ENCODE measurements at regions of chr6 and their contacts with region 1.

Region 1: DNA sequence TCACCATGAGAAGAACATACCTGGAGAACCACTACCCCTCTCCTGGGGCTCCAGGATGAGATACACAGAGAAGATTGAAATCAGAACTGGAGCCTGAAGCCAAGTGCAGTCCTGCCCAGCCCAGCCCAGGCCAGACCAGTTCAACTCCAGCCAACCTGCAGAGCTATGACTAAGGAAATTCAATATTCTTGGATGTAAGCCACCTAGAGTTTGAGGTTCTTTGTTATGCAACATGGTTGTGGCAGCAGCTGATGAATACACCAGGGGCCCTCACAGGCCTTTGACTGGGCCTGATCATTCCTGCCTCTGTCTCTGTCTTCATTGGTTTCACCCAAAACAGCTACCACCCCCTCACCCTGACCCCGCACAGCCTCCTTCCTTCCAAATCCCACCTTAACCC is 167.8 kb downstream of the LRFN2 start:
- DNase-seq: no peak
- ATAC-seq: no peak
- H3K4me3 ChIP-seq: no peak overlapping the region
- H3K4me1 ChIP-seq: no peaks in the 10 kb centered on the region
- CTCF ChIP-seq: no peak

Region 2: DNA sequence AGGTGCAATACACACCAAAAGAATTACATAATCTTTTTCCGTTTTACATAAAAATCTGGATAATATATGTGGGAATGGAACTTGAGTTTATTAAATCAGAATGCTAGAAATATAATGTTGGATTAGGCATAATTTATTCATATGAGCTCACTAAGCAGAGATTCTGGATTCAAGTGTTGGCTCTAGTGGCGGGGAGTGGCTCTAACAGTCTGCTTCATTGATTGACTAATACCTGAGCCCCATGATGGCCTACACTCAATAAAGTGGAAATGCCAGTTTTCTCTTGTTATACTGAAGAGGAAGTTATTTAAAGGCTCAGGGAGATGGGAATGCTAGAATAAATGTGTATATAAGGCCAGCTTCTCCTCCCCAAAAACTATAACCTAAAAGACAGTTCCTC is 199.6 kb before region 1 on chr6:
- intact Hi-C with region 1: loop called in 1 of 2 experiments (anchors 5 kb)
- DNase-seq: no peak
- ATAC-seq: no peak
- H3K4me3 ChIP-seq: no peak overlapping the region
- H3K4me1 ChIP-seq: no peaks in the 10 kb centered on the region
- CTCF ChIP-seq: no peak

Measured in mucosa of descending colon (tissue), 3 donors.